GM12878 (cell line): ENCODE measurements at regions of chr9 and their contacts with region 1.

Region 1: DNA sequence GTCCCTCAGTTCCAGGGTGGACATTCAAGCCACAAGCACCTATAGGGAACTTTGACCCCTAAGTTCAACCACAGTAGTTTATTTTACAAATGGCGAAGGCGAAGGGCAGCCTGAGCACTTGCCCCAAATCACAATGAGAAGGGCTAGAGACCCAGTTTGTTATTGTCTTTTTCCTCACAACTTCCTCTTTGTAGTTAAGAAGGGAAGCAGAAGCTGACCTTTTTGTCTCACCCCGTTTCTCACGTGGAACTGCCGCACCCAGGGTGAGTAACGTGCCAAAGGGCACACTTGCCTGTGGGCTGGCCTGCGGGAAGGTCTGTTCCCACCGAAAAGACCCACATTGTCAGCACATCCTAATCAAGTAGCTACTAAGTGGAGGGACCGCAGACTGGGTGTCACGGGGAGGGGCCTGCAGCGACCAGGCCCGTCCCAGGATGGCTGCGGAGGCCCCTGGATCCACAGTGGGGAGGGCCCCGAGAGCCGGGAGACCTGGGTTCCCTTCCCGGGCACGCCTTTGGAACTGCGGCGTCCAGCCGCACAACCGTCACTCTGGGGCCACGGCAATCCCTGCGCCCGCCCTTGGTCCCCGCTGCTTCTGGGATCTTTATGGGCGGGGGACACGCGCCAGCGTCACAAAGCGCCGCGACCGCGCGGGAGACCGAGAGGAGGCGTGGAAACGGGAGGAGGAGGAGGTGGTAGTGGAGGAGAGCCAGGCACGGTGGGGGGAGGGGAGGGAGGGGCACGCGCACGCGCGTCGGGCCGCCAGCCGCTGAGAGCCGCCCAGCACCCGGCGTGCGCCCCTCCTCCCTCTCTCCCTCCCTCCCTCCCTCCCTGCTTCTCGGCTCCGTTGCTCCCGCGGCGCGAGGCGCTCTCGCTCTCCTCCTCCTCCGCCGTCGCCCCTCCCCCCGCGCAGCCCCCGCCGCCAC is at the start of gene UBE2R2:
- DNase-seq: peak; percentile 85
- ATAC-seq: peak; percentile 71
- H3K4me3 ChIP-seq: peak within 1 kb of the TSS; percentile 95
- H3K27ac ChIP-seq: peak within 1 kb of the TSS; percentile 95
- H3K4me1 ChIP-seq: peaks cover 11% of the 10 kb centered on the region
- H3K27me3 ChIP-seq: no peaks in the 10 kb centered on the region
- CTCF ChIP-seq: no peak
- EP300 ChIP-seq: 0 out of 4 replicates have a peak, but pooled peaks of 1 of the 2 experiments have one; percentile 42
- POLR2A ChIP-seq: peak; percentile 86
- RAD21 ChIP-seq: no peak
- polyA plus RNA-seq, gene UBE2R2: 11.4 to 17.2 TPM

Region 2: GRCh38 chr9:33721674-33722358 is 94.8 kb before region 1 on chr9:
- CTCF ChIA-PET with region 1: no interaction called
- POLR2A ChIA-PET with region 1: no interaction called
- RAD21 ChIA-PET with region 1: no interaction called
- SMC1A ChIA-PET with region 1: no interaction called
- in situ Hi-C with region 1: no loop called
- intact Hi-C with region 1: no loop called
- DNase-seq: peak; percentile 17
- ATAC-seq: peak; percentile 86
- H3K4me3 ChIP-seq: no peak overlapping the region
- H3K27ac ChIP-seq: no peak overlapping the region
- H3K4me1 ChIP-seq: no peaks in the 10 kb centered on the region
- H3K27me3 ChIP-seq: no peaks in the 10 kb centered on the region
- CTCF ChIP-seq: peak; percentile 99 to 100 (median 100)
- EP300 ChIP-seq: no peak
- POLR2A ChIP-seq: no peak
- RAD21 ChIP-seq: peak; percentile 89

Region 3: GRCh38 chr9:33785913-33786312 is 30.7 kb before region 1 on chr9:
- CTCF ChIA-PET with region 1: interaction called, 10 read pairs
- POLR2A ChIA-PET with region 1: interaction called, 3 read pairs
- RAD21 ChIA-PET with region 1: no interaction called
- SMC1A ChIA-PET with region 1: no interaction called
- in situ Hi-C with region 1: no loop called
- intact Hi-C with region 1: no loop called
- DNase-seq: no peak
- ATAC-seq: peak; percentile 60; the same call in 2 of the 3 replicates
- H3K4me3 ChIP-seq: no peak overlapping the region
- H3K27ac ChIP-seq: no peak overlapping the region
- H3K4me1 ChIP-seq: no peaks in the 10 kb centered on the region
- H3K27me3 ChIP-seq: no peaks in the 10 kb centered on the region
- CTCF ChIP-seq: peak; percentile 11 to 25 (median 24); a peak in 3 of 6 replicates
- EP300 ChIP-seq: no peak
- POLR2A ChIP-seq: no peak
- RAD21 ChIP-seq: 0 out of 2 replicates have a peak, but pooled peaks have one; percentile 12

Region 4: GRCh38 chr9:33852216-33852826 is 35.7 kb after region 1 on chr9:
- CTCF ChIA-PET with region 1: interaction called, 128 read pairs
- POLR2A ChIA-PET with region 1: interaction called, 4 read pairs
- RAD21 ChIA-PET with region 1: interaction called, 66 read pairs
- SMC1A ChIA-PET with region 1: interaction called, 77 read pairs
- in situ Hi-C with region 1: no loop called
- intact Hi-C with region 1: loop called (anchors 1 kb)
- DNase-seq: no peak
- ATAC-seq: peak; percentile 86
- H3K4me3 ChIP-seq: no peak overlapping the region
- H3K27ac ChIP-seq: no peak overlapping the region
- H3K4me1 ChIP-seq: no peaks in the 10 kb centered on the region; the same call in 1 of the 2 replicates
- H3K27me3 ChIP-seq: no peaks in the 10 kb centered on the region
- CTCF ChIP-seq: peak; percentile 39 to 72 (median 52); a peak in 5 of 6 replicates
- EP300 ChIP-seq: no peak
- POLR2A ChIP-seq: no peak
- RAD21 ChIP-seq: peak; percentile 84

Region 5: GRCh38 chr9:33884856-33885701 is 68.5 kb after region 1 on chr9:
- CTCF ChIA-PET with region 1: interaction called, 10 read pairs
- POLR2A ChIA-PET with region 1: no interaction called
- RAD21 ChIA-PET with region 1: interaction called, 3 read pairs
- SMC1A ChIA-PET with region 1: interaction called, 6 read pairs
- in situ Hi-C with region 1: no loop called
- intact Hi-C with region 1: no loop called
- DNase-seq: no peak
- ATAC-seq: no peak
- H3K4me3 ChIP-seq: no peak overlapping the region
- H3K27ac ChIP-seq: no peak overlapping the region
- H3K4me1 ChIP-seq: no peaks in the 10 kb centered on the region
- H3K27me3 ChIP-seq: no peaks in the 10 kb centered on the region
- CTCF ChIP-seq: no peak
- EP300 ChIP-seq: no peak
- POLR2A ChIP-seq: no peak
- RAD21 ChIP-seq: no peak

Region 6: DNA sequence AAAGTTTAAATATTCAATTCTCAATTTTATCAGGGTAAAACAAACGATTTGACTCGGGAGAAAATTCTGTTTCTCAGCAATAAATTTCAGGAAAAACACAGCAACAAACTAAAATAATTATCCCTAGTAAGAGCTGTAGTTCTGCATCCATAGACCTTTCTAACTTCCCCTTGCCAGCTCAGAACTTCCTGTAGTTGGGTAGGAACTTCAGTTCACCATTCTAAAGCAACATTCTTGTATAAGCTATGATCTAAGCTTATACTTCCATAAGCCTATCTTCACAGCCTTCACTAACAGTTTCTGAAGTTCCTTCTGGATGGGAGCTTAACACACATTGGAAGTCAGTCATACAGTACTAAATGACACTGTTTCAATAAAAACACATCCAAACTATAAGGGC is 135.5 kb after region 1 on chr9:
- CTCF ChIA-PET with region 1: interaction called, 12 read pairs
- POLR2A ChIA-PET with region 1: no interaction called
- RAD21 ChIA-PET with region 1: interaction called, 3 read pairs
- SMC1A ChIA-PET with region 1: interaction called, 4 read pairs
- in situ Hi-C with region 1: no loop called
- intact Hi-C with region 1: no loop called
- DNase-seq: no peak
- ATAC-seq: no peak
- H3K4me3 ChIP-seq: no peak overlapping the region
- H3K27ac ChIP-seq: no peak overlapping the region
- H3K4me1 ChIP-seq: peaks cover 4% of the 10 kb centered on the region; the same call in 1 of the 2 replicates
- H3K27me3 ChIP-seq: no peaks in the 10 kb centered on the region
- CTCF ChIP-seq: no peak
- EP300 ChIP-seq: no peak
- POLR2A ChIP-seq: no peak
- RAD21 ChIP-seq: no peak